ENCODE measurements at regions of chr19 and their contacts with region 1.

Region 1: GRCh38 chr19:12956446-12957388 is at the start of gene GADD45GIP1:
- DNase-seq: peak; percentile 68 to 87 (median 78)
- ATAC-seq: peak; percentile 93 to 98
- H3K4me3 Mint-ChIP-seq: peak within 1 kb of the TSS; percentile 75 to 93 (median 86)
- H3K27ac Mint-ChIP-seq: peak within 1 kb of the TSS; percentile 61 to 95 (median 91)
- H3K4me1 Mint-ChIP-seq: peaks cover 15 to 29% (median 25%) of the 10 kb centered on the region in 4 donors
- H3K27me3 Mint-ChIP-seq: no peaks in the 10 kb centered on the region
- polyA plus RNA-seq, gene GADD45GIP1: 59.4 to 65.1 (median 64.7) TPM

Region 2: DNA sequence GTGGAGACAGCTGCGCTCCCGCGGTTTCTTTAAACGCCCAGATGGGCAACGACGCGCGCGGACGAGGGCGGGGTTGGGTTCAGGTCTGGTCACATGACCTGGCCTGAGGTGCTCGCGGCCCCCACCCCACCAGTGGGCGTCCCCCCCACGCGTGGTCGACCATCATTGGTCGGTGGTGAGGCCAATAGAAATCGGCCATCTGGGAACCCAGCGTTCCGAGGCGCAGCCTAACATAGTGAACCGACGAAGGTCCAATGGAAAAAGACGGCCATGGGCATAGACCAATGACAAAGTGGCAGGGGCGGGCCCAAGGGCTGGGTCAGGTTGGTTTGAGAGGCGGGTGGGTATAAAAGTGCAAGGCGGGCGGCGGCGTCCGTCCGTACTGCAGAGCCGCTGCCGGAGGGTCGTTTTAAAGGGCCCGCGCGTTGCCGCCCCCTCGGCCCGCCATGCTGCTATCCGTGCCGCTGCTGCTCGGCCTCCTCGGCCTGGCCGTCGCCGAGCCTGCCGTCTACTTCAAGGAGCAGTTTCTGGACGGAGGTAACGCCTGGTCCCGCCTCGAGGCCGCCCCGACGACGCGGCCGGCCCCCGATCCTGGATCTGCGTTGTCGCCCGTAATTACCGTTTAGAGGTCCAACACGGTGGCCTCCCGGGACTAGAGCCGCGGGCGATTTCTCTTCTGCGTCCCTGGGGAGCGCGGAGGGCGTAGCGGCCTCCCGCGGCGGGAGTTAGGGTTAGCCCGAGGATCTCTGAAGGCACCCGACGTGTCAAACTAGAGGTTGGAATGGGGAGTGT is 18.3 kb before region 1 on chr19 and contains the start of gene CALR:
- POLR2A ChIA-PET with region 1: interaction called, 17 read pairs
- DNase-seq: peak; percentile 95 to 100 (median 100)
- ATAC-seq: peak; percentile 88 to 91
- H3K4me3 Mint-ChIP-seq: peak within 1 kb of the TSS; percentile 97 to 100 (median 98)
- H3K27ac Mint-ChIP-seq: peak within 1 kb of the TSS; percentile 94 to 99 (median 96)
- H3K4me1 Mint-ChIP-seq: peaks cover 25 to 70% (median 61%) of the 10 kb centered on the region in 4 donors
- H3K27me3 Mint-ChIP-seq: no peaks in the 10 kb centered on the region
- polyA plus RNA-seq, gene CALR: 135 to 190 (median 165) TPM

Region 3: DNA sequence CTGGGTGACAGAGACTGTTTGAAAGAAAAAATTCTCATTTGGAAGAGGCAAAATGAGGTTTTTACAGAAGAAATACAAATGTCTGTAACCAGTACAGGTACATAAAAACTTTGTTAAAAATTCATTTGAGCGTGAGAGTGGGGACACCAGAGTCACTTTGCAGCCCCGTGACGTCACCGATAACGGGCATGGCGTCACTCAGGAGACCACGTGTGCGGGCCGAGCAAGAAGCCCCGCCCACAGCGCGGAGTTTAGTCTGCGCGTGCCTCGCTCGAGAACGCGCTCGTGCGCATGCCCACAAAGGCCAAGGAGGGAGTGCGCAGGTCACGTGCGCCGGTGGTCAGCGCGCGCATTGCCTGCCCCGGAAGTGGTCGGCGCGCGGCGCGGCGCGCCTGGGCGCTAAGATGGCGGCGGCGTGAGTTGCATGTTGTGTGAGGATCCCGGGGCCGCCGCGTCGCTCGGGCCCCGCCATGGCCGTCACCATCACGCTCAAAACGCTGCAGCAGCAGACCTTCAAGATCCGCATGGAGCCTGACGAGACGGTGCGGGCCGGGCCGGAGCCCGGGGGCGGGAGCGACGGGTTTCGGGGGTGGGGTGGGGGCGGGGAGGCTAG is 11.1 kb before region 1 on chr19 and contains the start of gene RAD23A:
- POLR2A ChIA-PET with region 1: interaction called, 14 read pairs
- DNase-seq: peak; percentile 96 to 99 (median 98)
- ATAC-seq: peak; percentile 80 to 84
- H3K4me3 Mint-ChIP-seq: peak within 1 kb of the TSS; percentile 86 to 99 (median 92)
- H3K27ac Mint-ChIP-seq: peak within 1 kb of the TSS; percentile 90 to 99 (median 96)
- H3K4me1 Mint-ChIP-seq: peaks cover 16 to 59% (median 48%) of the 10 kb centered on the region in 4 donors
- H3K27me3 Mint-ChIP-seq: peaks cover 0 to 2% (median 0%) of the 10 kb centered on the region in 5 donors
- polyA plus RNA-seq, gene RAD23A: 78.0 to 114 (median 102) TPM

Measured in naive thymus-derived CD8-positive, alpha-beta T cell (primary cell).